ENCODE measurements at regions of chr9 and their contacts with region 1.

Region 1: DNA sequence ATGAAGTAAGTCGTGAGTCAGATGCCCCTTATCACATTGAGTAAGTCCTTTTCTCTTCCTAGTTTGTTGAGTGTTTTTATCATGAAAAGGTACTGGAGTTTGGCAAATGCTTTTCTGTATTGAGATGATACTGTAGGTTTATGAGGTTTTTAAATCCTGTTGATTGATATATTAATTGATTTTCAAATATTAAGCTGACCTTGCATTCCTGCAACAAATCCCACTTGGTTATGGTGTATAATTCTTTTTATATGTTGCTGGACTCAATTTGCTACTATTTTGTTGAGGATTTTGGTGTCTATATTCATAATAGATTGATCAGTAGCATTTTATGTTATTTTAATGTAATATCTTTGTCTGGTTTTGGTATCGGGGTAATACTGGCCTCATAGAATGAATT is 81.0 kb upstream of the BNC2 start:
- DNase-seq: no peak
- H3K4me3 ChIP-seq: no peak overlapping the region
- H3K27ac ChIP-seq: no peak overlapping the region
- H3K4me1 ChIP-seq: no peaks in the 10 kb centered on the region
- H3K27me3 ChIP-seq: no peaks in the 10 kb centered on the region
- CTCF ChIP-seq: no peak

Region 2: DNA sequence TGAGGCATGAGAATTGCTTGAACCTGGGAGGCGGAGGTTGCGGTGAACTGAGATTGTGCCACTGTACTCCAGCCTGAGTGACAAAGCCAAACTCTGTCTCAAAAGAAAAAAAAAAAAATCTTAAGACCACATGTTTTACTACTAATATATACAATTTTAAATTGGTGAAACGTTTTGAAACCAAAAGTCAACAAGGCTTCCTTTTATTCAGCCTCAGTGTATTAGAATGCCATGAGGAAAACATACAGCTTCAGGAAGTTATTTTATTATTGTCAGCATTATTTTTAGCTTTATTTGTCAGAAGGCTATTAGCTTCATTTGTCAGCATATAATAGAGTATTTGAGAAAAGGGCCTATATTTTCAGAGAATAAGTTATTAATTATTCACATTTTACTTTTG is 463.5 kb after region 1 on chr9:
- CTCF ChIA-PET with region 1: no interaction called
- POLR2A ChIA-PET with region 1: interaction called, 15 read pairs
- intact Hi-C with region 1: no loop called
- DNase-seq: no peak
- H3K4me3 ChIP-seq: no peak overlapping the region
- H3K27ac ChIP-seq: no peak overlapping the region
- H3K4me1 ChIP-seq: no peaks in the 10 kb centered on the region
- H3K27me3 ChIP-seq: no peaks in the 10 kb centered on the region
- CTCF ChIP-seq: no peak